ENCODE measurements at regions of chr18 and their contacts with region 1.

Region 1: DNA sequence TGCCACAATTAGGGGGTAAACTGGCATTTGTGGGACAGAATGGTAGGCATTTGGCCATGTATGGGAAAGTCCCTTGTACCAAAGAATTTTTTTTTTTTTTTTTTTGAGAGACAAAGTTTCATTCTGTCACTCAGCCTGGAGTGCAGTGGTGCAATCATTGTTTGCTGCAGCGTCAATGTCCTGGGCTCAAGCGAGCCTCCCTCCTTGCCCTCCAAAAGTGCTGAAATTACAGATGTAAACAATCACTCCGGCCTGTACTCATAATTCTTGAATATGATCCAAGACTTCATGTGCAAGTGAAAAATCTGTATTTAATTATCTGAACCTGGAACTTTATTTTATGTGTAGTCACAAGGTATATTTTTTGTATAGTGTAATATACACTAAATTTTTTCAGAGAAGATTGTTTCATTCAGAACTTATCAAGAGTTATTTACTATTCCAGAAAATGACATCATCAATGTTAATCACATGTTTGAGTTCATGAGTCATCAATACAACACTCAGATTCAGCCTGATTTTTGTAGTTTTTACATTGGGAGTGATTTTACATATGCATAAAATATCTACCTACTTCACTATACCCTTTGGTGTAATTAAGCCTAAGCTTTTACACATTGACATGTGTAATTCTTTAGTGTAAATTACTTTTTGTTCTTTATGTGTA is 138.7 kb upstream of the L3MBTL4 start:
- DNase-seq: peak; percentile 13
- ATAC-seq: no peak
- H3K4me3 ChIP-seq: no peak overlapping the region
- H3K27ac ChIP-seq: no peak overlapping the region
- H3K4me1 ChIP-seq: peaks cover 2% of the 10 kb centered on the region; the same call in 1 of the 2 replicates
- H3K27me3 ChIP-seq: no peaks in the 10 kb centered on the region
- CTCF ChIP-seq: no peak
- POLR2A ChIP-seq: no peak
- RAD21 ChIP-seq: no peak

Region 2: DNA sequence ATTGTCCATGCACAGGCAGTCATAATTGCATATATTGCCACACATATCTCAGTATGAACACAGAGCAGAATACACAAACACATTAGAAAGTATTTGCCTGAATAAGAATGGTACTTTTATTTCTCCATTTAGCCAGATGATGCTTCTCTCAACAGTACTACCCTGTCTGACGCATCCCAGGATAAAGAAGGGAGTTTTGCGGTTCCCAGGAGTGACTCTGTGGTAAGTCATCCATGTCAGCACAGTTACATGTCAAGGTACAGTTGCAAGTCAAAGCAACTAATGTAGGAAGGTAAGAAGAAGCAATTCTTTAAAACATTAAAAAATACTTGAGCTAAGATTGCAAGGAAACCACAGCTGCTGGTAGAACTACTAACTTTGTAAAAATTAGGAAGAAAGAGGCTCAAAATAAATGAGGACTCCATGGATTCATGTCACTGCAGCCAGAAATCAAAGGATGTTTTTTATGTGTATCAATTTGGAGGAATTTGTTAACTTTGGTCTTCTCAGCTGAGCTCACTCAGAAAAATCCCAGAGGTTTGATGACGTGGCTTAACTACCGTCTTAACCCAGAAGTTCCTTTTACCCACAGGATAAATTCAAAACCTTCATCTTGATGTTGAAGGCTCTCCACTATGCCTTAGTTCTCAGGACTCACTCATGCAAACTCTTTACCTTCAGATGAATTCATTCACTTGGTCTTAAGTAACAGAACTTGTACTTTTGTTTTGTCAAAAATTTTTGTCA is 306.5 kb after region 1 on chr18:
- CTCF ChIA-PET with region 1: no interaction called
- POLR2A ChIA-PET with region 1: no interaction called
- dilution Hi-C with region 1: no loop called
- in situ Hi-C with region 1: no loop called
- intact Hi-C with region 1: no loop called
- DNase-seq: peak; percentile 39
- ATAC-seq: no peak
- H3K4me3 ChIP-seq: no peak overlapping the region
- H3K27ac ChIP-seq: peak overlapping the region; percentile 61; the same call in 1 of the 2 replicates
- H3K4me1 ChIP-seq: peaks cover 7% of the 10 kb centered on the region
- H3K27me3 ChIP-seq: no peaks in the 10 kb centered on the region
- CTCF ChIP-seq: no peak
- POLR2A ChIP-seq: no peak
- RAD21 ChIP-seq: no peak

Region 3: GRCh38 chr18:6891788-6892187 is 338.4 kb after region 1 on chr18:
- CTCF ChIA-PET with region 1: no interaction called
- POLR2A ChIA-PET with region 1: no interaction called
- dilution Hi-C with region 1: no loop called
- in situ Hi-C with region 1: loop called (anchors 5 kb)
- intact Hi-C with region 1: no loop called
- DNase-seq: peak; percentile 56
- ATAC-seq: peak; percentile 64; the same call in 1 of the 2 replicates
- H3K4me3 ChIP-seq: no peak overlapping the region
- H3K27ac ChIP-seq: no peak overlapping the region
- H3K4me1 ChIP-seq: no peaks in the 10 kb centered on the region; the same call in 1 of the 2 replicates
- H3K27me3 ChIP-seq: no peaks in the 10 kb centered on the region
- CTCF ChIP-seq: no peak
- POLR2A ChIP-seq: no peak
- RAD21 ChIP-seq: no peak

Measured in IMR-90 (cell line).